Activated T-helper 1 cell treated with anti-CD3 and anti-CD28 coated beads, Interleukin-12 subunit alpha, Interleukin-12 subunit beta, Interleukin-2, Interleukin-4 antibody, amounts not matched to agents 30 ng/mL and 10 ng/mL and 1 ng/mL, durations not matched to agents 14 hours and 24 hours and 36 hours (primary cell): ENCODE measurements at regions of chr11 and their contacts with region 1.

Region 1: GRCh38 chr11:35040221-35040942 is 98.6 kb upstream of the CD44 start:
- DNase-seq: peak; percentile 70
- H3K4me3 Mint-ChIP-seq: peak overlapping the region; percentile 72
- H3K27ac Mint-ChIP-seq: peak overlapping the region; percentile 93
- H3K4me1 Mint-ChIP-seq: peaks cover 66% of the 10 kb centered on the region
- H3K27me3 Mint-ChIP-seq: peaks cover 2% of the 10 kb centered on the region

Region 2: GRCh38 chr11:35006389-35007128 is 33.8 kb before region 1 on chr11:
- intact Hi-C with region 1: loop called (anchors 1 kb)
- DNase-seq: no peak
- H3K4me3 Mint-ChIP-seq: no peak overlapping the region
- H3K27ac Mint-ChIP-seq: peak overlapping the region; percentile 61
- H3K4me1 Mint-ChIP-seq: peaks cover 59% of the 10 kb centered on the region
- H3K27me3 Mint-ChIP-seq: peaks cover 18% of the 10 kb centered on the region

Region 3: GRCh38 chr11:35066783-35067423 is 26.5 kb after region 1 on chr11:
- intact Hi-C with region 1: loop called (anchors 1 kb)
- DNase-seq: peak; percentile 25
- H3K4me3 Mint-ChIP-seq: peak overlapping the region; percentile 8
- H3K27ac Mint-ChIP-seq: peak overlapping the region; percentile 66
- H3K4me1 Mint-ChIP-seq: peaks cover 31% of the 10 kb centered on the region
- H3K27me3 Mint-ChIP-seq: no peaks in the 10 kb centered on the region

Region 4: DNA sequence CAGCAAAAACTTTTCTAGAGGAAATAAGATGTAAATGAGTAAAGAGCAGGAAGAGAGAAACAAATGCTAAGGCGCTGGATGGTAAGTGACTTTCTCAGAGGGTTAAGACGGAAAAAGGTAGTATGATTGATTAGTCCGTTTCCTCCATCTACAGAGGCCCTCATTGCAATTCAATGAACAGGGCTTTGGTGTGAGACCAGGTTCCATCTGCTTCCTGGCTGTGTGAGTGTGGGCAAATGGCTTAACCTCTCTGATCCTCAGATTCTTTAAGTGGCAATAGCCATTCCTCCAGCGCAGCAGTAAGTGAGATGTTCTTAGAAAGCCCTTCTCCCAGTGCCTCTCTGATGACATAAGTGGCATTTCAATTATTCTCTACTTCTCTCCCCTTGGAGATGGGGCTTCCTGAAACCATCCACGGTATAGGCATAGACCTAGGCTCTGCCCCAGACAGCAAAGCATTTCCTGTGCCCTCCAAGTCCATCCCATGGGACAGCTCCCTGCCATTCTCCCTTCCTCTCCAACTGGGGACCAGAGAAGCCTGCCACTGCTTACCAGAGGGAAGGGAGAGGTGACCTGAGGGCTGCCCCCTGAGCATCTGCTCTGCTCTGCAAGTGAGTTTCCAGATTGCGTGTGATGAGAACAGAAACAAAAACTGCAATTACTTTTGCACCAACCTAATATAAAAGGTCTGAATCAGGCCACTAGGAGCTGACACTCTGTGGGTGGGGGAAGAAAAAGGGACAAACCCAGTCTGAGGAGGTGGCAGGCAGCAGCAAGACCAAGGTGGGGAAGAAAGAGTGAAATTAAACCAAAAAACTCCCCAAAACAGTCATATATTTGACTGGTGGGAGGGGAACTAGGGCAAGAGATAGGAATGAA is 85.9 kb after region 1 on chr11:
- intact Hi-C with region 1: loop called (anchors 1 kb)
- DNase-seq: no peak
- H3K4me3 Mint-ChIP-seq: peak overlapping the region; percentile 64
- H3K27ac Mint-ChIP-seq: peak overlapping the region; percentile 84
- H3K4me1 Mint-ChIP-seq: peaks cover 58% of the 10 kb centered on the region
- H3K27me3 Mint-ChIP-seq: no peaks in the 10 kb centered on the region

Region 5: DNA sequence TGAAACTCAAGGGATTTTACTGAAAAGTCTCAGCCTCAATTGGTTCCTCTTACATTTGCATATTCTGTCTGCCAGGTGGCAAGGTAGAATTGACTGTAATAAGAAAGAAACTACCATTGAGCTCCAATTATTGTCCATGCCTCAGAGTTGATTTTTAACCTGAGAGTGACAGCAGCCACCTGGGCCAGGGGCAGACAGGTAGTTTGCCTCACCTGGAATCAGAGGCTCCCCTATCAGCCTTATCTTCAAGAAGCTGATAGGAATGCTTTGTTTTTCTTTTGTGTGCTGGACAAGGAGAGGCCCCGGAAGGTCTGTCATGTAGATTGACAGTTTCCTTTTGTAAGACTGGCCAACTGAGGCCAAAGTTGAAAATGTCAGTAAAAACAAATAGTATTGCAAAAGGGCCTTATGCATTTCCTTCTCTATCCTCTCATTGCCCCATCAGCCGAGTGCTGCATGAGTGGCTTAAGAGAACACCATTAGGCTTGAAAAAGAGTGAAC is 132.7 kb after region 1 on chr11:
- intact Hi-C with region 1: loop called (anchors 1 kb)
- DNase-seq: no peak
- H3K4me3 Mint-ChIP-seq: peak overlapping the region; percentile 56
- H3K27ac Mint-ChIP-seq: peak overlapping the region; percentile 75
- H3K4me1 Mint-ChIP-seq: peaks cover 92% of the 10 kb centered on the region
- H3K27me3 Mint-ChIP-seq: no peaks in the 10 kb centered on the region

Region 6: GRCh38 chr11:35343033-35343598 is 302.7 kb after region 1 on chr11:
- intact Hi-C with region 1: loop called (anchors 1 kb)
- DNase-seq: peak; percentile 65
- H3K4me3 Mint-ChIP-seq: peak overlapping the region; percentile 27
- H3K27ac Mint-ChIP-seq: peak overlapping the region; percentile 79
- H3K4me1 Mint-ChIP-seq: peaks cover 46% of the 10 kb centered on the region
- H3K27me3 Mint-ChIP-seq: peaks cover 9% of the 10 kb centered on the region